Adrenal gland (tissue), 19 donors: ENCODE measurements at regions of chr4 and their contacts with region 1.

Region 1: DNA sequence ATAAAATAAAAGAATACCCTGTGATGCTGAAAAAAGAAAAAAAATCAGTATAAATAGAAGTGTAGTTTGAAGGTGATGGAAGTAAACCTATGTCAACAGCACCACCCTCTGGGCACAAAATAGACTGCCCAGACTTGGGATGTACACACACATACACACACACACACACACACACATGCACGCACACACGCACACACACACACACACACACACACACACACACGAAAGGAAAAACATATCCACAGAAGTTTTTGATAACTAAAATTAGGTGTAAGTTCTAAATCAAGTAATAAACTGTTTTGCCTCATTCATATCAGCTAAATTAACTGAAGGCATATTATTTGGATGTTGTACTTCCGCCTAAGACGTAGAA is 40.5 kb downstream of the ANXA5 start:
- DNase-seq: peak; percentile 72 to 88 (median 75)
- H3K4me3 ChIP-seq: no peak overlapping the region
- H3K27ac ChIP-seq: no peak overlapping the region
- H3K4me1 ChIP-seq: peaks cover 0 to 12% of the 10 kb centered on the region in 2 donors
- H3K27me3 ChIP-seq: no peaks in the 10 kb centered on the region
- CTCF ChIP-seq: peak; percentile 30 to 92 (median 51)
- POLR2A ChIP-seq: no peak

Region 2: DNA sequence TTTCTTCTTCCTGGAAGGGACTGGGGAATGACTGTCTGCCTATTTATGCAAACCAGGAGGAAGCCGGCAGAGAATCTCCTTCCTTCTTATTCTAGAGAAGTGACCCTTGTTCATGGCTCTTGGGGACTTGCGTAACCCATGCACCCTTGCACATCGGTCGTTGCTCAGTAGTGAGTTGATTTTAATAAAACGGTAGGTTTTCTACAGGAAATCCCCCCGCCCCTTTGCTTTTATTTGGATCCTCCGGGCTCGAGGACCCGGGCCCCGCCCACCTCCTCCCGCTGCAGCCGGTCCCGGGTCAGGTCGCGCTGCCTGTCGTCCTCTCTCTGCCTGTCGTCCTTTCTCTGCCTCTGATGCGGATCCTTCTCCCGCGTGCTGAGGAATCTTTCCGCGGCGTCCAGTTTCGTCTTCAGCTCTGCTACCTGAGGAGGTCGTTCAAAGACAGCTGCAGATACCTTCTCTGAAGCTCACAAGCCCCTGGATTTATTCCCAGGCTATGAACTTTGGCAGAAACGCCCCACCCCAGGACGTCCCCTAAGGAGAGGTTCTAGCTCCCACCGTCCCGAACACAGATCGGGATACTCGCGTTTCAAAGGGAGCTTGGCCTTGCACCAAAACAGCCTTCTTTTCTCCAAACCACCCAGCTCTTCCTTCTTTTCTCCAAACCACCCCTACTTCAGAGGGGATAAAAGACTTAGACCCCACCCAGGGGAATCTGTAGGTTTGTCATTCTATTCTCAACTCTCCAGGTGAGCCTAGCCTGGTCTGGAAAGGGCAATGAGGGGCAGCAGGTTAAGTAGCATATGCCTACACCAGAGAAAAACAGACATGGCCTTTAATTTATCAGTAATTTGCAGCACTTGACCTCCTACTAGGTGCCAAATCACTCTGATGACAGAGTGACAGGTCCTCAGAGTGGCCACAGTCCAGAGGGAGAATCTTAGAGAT is 499.2 kb before region 1 on chr4:
- intact Hi-C with region 1: no loop called
- DNase-seq: peak; percentile 20 to 52 (median 32)
- H3K4me3 ChIP-seq: peak overlapping the region in 2 of 4 donors; percentile 18 to 49
- H3K27ac ChIP-seq: no peak overlapping the region
- H3K4me1 ChIP-seq: peaks cover 8 to 9% of the 10 kb centered on the region in 2 donors
- H3K27me3 ChIP-seq: no peaks in the 10 kb centered on the region
- CTCF ChIP-seq: no peak
- POLR2A ChIP-seq: no peak

Region 3: DNA sequence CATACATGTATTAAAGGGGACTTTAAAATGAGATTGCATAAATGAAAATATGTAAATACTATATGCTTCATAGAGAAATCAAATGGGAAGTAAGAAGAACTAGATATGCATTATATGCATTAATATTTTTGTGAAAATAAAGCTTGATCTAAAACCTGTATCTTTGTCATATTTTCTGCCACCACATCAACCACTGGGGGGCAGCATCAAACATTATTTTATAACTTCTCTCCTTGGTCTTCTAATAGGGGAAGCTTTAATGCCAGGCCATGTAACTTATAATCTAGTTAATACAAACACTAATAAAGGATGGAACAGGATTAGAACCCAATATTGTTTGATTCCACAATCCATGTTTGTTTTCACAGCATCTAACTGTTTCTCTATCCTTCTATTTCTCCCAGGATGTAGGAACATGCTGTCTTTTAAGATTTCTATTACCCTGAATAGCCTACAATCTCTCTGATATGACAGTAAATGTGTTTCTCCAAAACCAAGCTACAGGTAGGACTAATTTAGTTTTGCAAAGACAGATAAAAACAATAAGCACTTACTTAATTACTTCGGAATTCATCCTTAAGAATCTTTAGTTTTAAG is 285.4 kb before region 1 on chr4:
- intact Hi-C with region 1: loop called (anchors 10 kb)
- DNase-seq: peak in 6 of 7 donors; percentile 43 to 72 (median 60)
- H3K4me3 ChIP-seq: no peak overlapping the region
- H3K27ac ChIP-seq: no peak overlapping the region
- H3K4me1 ChIP-seq: no peaks in the 10 kb centered on the region
- H3K27me3 ChIP-seq: no peaks in the 10 kb centered on the region
- CTCF ChIP-seq: peak; percentile 44 to 72 (median 54)
- POLR2A ChIP-seq: no peak

Region 4: DNA sequence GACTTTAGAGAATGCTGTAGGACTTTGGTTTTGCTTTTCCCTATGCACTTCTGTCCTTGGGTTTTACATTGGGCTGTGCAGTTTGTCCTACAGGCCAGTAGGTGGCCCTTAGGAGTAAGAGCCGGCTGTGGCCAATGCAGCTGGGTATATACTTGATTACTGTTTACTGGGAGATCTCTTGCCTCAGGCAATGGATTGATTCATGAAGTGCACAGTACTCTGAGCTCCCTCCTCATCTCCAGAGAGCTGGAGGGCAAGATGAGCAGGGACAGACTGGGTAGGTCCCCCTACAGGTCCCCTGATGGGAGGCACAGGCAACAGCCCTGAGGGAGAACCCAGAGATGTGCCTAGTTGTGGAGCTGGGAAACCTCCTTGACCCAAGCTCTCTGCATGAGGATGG is 171.6 kb before region 1 on chr4:
- intact Hi-C with region 1: loop called (anchors 10 kb)
- DNase-seq: peak; percentile 33 to 72 (median 50)
- H3K4me3 ChIP-seq: no peak overlapping the region
- H3K27ac ChIP-seq: no peak overlapping the region
- H3K4me1 ChIP-seq: no peaks in the 10 kb centered on the region
- H3K27me3 ChIP-seq: no peaks in the 10 kb centered on the region
- CTCF ChIP-seq: peak; percentile 50 to 76 (median 68)
- POLR2A ChIP-seq: no peak

Region 5: DNA sequence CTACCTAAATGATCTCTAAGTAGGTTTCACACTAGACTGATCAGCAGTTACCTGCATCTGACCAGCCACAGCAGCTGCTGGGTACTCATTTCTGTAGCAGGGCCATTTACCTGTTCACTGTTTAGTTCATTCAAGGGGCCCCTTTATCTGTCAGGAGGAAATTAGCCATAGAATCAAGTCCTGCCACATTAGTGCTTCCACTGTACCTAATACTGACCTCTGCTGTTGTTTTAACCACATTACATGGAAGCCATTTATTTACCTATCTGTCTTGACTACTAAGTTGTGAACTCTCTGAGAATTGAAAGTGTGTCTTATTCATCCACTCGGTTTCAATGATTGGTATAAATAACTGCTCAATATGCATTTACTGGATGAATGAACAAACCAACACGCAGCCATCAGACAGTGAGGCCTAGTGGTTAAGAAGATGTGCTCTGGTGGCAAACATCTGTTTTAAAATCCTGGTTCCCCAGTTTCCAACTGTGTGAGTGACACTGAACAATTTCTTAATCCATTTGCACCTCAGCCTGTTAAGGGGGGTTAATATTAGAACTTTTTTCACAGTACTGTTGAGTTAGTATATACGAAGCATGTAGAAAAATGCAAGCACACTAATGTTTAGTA is 70.5 kb after region 1 on chr4:
- intact Hi-C with region 1: no loop called
- DNase-seq: no peak
- H3K4me3 ChIP-seq: no peak overlapping the region
- H3K27ac ChIP-seq: no peak overlapping the region
- H3K4me1 ChIP-seq: no peaks in the 10 kb centered on the region
- H3K27me3 ChIP-seq: no peaks in the 10 kb centered on the region
- CTCF ChIP-seq: peak; percentile 69 to 87 (median 81)
- POLR2A ChIP-seq: no peak

Region 6: DNA sequence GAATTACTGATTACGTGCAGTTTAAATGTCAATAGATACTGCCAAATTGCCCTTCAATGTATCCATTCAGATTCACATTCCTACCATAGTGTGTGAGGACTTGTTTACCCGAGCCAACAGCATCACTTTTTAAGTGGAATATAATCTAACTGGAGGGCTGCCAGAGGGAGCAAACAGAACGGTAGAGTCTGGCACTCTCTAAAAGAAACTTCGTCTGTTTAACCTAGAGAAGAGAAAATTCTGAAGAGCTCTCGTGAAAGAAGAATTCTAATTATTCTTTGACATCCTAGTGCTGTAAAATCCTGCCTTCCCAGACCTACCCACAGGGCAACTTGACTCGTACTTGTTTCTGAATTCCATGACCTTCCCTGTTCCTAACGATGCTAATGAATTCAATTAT is 85.5 kb after region 1 on chr4:
- intact Hi-C with region 1: no loop called
- DNase-seq: no peak
- H3K4me3 ChIP-seq: no peak overlapping the region
- H3K27ac ChIP-seq: no peak overlapping the region
- H3K4me1 ChIP-seq: no peaks in the 10 kb centered on the region
- H3K27me3 ChIP-seq: no peaks in the 10 kb centered on the region
- CTCF ChIP-seq: no peak
- POLR2A ChIP-seq: no peak